ENCODE measurements at regions of chr22 and their contacts with region 1.

Region 1: GRCh38 chr22:36286471-36287224 is 33.7 kb downstream of the APOL1 start:
- DNase-seq: peak; percentile 69 to 85 (median 84)
- ATAC-seq: peak; percentile 75 to 91 (median 90)
- H3K4me3 ChIP-seq: no peak overlapping the region
- H3K27ac ChIP-seq: peak overlapping the region in 2 of 3 donors; percentile 61 to 66
- H3K4me1 ChIP-seq: peaks cover 0 to 16% (median 8%) of the 10 kb centered on the region in 4 donors
- H3K27me3 ChIP-seq: no peaks in the 10 kb centered on the region
- CTCF ChIP-seq: peak; percentile 80 to 98 (median 94)
- POLR2A ChIP-seq: no peak

Region 2: GRCh38 chr22:36144886-36145541 is 141.6 kb before region 1 on chr22:
- intact Hi-C with region 1: loop called in 1 of 2 experiments (anchors 5 kb)
- DNase-seq: peak in 2 of 3 donors; percentile 44 to 75
- ATAC-seq: peak; percentile 75 to 82 (median 80)
- H3K4me3 ChIP-seq: no peak overlapping the region
- H3K27ac ChIP-seq: peak overlapping the region in 2 of 3 donors; percentile 5 to 19
- H3K4me1 ChIP-seq: peaks cover 0 to 33% (median 12%) of the 10 kb centered on the region in 4 donors
- H3K27me3 ChIP-seq: no peaks in the 10 kb centered on the region
- CTCF ChIP-seq: peak; percentile 81 to 88 (median 85)
- POLR2A ChIP-seq: no peak

Region 3: DNA sequence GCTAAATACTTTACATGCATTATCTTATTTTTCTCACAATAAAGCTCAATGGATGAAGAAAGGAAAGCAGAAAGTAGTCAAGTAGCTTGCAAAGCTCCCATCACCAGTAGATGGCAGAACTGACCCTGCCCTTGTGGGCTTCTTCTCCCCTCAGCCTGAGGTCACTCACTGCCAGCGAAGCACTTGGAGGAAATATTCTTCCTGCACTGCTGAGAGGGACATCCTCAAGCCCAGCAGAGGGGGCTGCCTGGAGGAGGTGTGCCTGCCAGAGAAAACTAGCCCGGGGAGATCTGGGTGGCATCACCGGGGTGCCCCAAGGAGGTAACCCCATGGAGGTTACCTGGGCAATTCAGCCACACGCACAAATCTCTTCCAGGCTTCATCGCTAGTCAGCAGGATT is 91.7 kb before region 1 on chr22:
- intact Hi-C with region 1: loop called in 1 of 2 experiments (anchors 10 kb)
- DNase-seq: peak in 2 of 3 donors; percentile 44 to 62
- ATAC-seq: peak; percentile 69 to 75 (median 73)
- H3K4me3 ChIP-seq: no peak overlapping the region
- H3K27ac ChIP-seq: no peak overlapping the region
- H3K4me1 ChIP-seq: peaks cover 0 to 36% (median 12%) of the 10 kb centered on the region in 4 donors
- H3K27me3 ChIP-seq: no peaks in the 10 kb centered on the region
- CTCF ChIP-seq: peak; percentile 69 to 79 (median 74)
- POLR2A ChIP-seq: no peak

Region 4: GRCh38 chr22:36239401-36240171 is 47.1 kb before region 1 on chr22 and contains the start of gene APOL2:
- intact Hi-C with region 1: loop called (anchors 10 kb)
- DNase-seq: peak; percentile 91
- ATAC-seq: peak; percentile 91 to 97 (median 94)
- H3K4me3 ChIP-seq: peak within 1 kb of the TSS; percentile 73 to 84 (median 78)
- H3K27ac ChIP-seq: peak within 1 kb of the TSS; percentile 78 to 95 (median 90)
- H3K4me1 ChIP-seq: peaks cover 0 to 22% (median 5%) of the 10 kb centered on the region in 4 donors
- H3K27me3 ChIP-seq: no peaks in the 10 kb centered on the region
- CTCF ChIP-seq: peak; percentile 60 to 76 (median 72)
- POLR2A ChIP-seq: peak; percentile 84
- total RNA-seq, gene APOL2: 40.8 to 121 (median 57.5) TPM

Measured in right lobe of liver (tissue), 6 donors.